Dorsolateral prefrontal cortex (tissue), 120 donors: ENCODE measurements at regions of chr11 and their contacts with region 1.

Region 1: DNA sequence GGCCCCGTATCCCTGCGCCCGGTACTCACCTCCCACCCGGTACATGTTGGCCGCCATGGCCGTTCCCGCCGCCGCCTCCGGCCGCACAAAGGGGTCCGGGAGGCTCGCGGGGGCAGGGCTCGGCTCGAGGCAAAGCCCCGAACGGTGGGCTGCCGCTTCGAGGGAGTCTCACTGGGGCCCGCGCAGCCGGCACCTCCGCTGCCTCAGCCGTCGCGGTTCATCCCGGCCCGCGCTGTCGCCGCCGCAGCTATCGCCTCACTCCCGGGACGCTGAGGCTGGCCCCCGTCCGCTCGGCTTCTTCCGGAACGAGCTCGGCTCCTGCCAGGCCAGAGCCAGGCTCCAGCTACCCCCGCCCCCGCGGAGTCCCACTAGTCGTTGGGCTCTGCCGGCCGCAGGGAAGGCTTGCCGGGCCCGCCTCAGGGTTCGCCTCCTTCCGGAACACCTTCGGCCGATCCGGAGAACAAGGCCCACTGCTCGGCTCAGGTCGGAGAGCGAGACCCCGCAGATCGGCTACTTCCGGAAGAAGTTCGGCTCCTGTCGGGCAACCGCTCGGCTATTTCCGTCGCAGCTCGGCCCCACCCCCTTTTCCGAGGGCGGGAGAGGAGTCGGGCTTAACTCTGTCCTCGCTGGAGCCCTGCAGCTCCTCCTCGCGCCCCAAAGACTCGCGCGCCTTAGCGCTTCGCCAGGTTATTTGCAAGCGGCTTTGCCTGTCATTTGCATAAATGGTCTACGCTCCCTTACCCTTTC is at the start of gene MTA2:
- DNase-seq: peak; percentile 89 to 98 (median 95)
- H3K4me3 ChIP-seq: peak within 1 kb of the TSS; percentile 54 to 100 (median 98)
- H3K27ac ChIP-seq: peak within 1 kb of the TSS; percentile 69 to 99 (median 97)
- H3K27me3 ChIP-seq: no peaks in the 10 kb centered on the region
- CTCF ChIP-seq: peak in 10 of 56 donors; percentile 1 to 30 (median 14)
- total RNA-seq, gene MTA2: 39.4 to 85.0 (median 58.9) TPM

Region 2: GRCh38 chr11:62472012-62472884 is 129.3 kb before region 1 on chr11:
- intact Hi-C with region 1: no loop called
- DNase-seq: no peak
- H3K4me3 ChIP-seq: no peak overlapping the region
- H3K27ac ChIP-seq: no peak overlapping the region
- H3K27me3 ChIP-seq: no peaks in the 10 kb centered on the region
- CTCF ChIP-seq: no peak

Region 3: DNA sequence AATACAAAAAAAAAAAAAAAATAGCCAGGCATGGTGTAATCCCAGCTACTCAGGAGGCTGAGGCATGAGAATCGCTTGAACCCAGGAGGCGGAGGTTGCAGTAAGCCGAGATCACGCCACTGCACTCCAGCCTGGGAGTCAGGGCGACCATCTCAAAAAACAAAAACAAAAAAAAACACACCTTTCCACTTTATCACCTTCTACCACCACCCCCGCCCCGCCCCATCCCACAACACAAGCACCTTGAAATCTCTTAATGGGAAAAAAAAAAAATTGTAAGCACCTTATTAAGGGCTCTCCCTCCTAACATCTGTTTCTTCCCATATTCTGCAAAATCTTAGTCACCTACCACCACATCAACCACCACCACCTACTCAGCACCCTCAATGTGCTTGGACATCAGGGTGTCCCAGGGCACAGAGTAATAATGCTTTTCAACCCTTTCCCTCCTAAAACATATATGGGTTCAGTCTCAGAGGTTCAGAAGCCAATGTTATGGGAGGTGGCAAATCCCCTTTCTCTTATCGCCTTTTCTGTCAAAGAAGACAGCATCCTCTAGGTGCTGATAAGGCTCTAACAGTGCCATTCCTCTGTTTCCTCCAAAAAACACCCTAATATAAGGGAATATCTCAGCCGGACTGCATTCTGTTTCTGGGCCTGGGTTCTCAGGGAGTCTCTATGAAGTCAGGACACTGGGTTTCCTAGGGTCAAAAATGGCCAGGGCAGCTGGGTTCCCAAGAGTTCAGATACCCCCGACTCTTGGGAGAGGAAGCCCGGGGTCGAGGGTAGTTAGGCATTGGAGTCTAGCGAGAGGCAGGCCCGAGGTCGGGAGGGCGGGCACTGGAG is 50.8 kb after region 1 on chr11:
- intact Hi-C with region 1: loop called in 1 of 2 experiments (anchors 5 kb)
- DNase-seq: no peak
- H3K4me3 ChIP-seq: peak overlapping the region; percentile 61 to 100 (median 93)
- H3K27ac ChIP-seq: peak overlapping the region; percentile 39 to 98 (median 92)
- H3K27me3 ChIP-seq: no peaks in the 10 kb centered on the region
- CTCF ChIP-seq: no peak

Region 4: DNA sequence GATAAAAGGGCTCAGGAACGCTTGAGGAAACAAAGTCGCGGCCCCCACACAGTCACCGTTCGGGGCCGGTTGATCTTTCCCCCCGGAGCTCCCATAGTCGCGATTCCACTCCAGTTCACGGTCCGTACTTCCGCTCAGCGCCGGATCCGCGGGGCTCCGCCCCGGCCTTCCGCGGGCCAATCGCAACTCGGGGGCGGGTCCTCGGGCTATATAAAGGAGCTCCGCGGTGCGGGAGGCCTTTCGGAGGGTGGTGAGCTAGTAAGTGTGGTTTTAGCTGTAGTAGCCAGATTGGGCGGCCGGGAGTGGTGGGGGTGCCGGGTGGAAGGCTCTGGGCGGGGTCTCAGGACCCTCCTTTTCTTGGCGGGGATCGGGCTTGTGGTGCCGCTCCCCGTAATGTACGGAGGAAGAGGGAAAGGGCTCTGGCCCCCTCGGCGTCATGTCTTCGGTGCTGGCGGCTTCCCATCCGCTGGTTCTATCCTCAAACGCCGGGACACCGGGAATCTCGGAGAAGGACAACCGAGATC is 63.6 kb after region 1 on chr11 and contains the starts of genes C11orf98 and CSKMT:
- intact Hi-C with region 1: loop called in 1 of 2 experiments (anchors 5 kb)
- DNase-seq: peak; percentile 91 to 99 (median 96)
- H3K4me3 ChIP-seq: peak within 1 kb of the TSS; percentile 60 to 100 (median 87)
- H3K27ac ChIP-seq: peak within 1 kb of the TSS; percentile 35 to 98 (median 90)
- H3K27me3 ChIP-seq: no peaks in the 10 kb centered on the region
- CTCF ChIP-seq: peak in 15 of 56 donors; percentile 5 to 27 (median 18)
- total RNA-seq, gene C11orf98: 26.5 to 49.6 (median 37.5) TPM
- total RNA-seq, gene CSKMT: 2.4 to 16.1 (median 6.8) TPM

Region 5: GRCh38 chr11:62678770-62679696 is 77.5 kb after region 1 on chr11 and contains the start of gene UBXN1:
- intact Hi-C with region 1: no loop called
- DNase-seq: peak; percentile 81 to 93 (median 87)
- H3K4me3 ChIP-seq: peak within 1 kb of the TSS; percentile 59 to 100 (median 97)
- H3K27ac ChIP-seq: peak within 1 kb of the TSS; percentile 60 to 97 (median 91)
- H3K27me3 ChIP-seq: no peaks in the 10 kb centered on the region
- CTCF ChIP-seq: peak in 25 of 56 donors; percentile 3 to 55 (median 22)
- total RNA-seq, gene UBXN1: 50.5 to 93.7 (median 71.1) TPM

Region 6: DNA sequence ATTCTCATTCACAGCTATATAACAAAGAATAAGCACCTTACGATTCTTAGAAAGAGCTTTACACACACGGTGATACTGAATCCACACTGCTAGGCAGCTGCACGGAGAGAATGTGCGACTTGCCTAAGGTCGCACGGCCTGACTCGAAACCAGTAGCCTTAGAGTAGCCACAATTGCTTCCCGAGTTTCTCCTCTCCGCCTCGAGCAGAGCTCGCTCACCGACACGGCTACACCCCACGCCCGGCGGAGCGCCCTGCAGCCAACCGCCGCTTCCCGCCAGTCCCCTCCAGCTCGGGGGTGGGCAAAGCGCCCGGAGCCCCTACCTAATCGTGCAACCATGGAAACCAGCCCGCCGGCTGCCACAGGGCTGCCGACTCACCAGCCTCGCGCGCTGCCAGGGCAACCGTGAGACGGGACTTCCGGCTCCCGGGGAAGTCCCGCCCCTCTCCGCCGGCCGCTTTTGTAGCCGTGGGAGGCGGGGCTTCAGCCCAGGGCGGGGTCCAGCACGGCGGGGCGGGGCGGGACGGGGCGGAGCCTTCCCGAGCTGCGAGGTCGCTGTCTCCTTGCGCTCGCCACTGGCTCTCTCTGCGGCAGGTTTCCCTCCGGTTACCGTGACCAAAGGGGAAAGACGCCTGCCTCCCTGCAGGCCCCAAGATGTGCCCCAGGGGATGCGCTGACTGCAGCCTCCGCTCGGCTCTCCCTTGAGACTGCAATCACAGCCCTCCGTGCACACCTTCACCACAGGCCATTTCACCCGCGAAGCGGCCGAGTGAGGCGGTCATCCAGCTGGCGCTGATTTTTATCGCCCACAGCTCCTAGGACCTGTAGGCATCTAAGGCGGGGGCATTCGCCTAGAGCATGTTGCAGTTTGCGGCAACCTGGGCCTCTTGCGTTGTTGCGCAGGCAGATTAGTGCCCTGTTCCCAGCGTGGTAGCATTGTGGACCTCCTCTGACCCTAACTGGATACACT is 104.6 kb after region 1 on chr11:
- intact Hi-C with region 1: loop called in 1 of 2 experiments (anchors 5 kb)
- DNase-seq: peak; percentile 91 to 98 (median 96)
- H3K4me3 ChIP-seq: peak overlapping the region; percentile 54 to 99 (median 82)
- H3K27ac ChIP-seq: peak overlapping the region; percentile 72 to 100 (median 96)
- H3K27me3 ChIP-seq: no peaks in the 10 kb centered on the region
- CTCF ChIP-seq: peak in 15 of 56 donors; percentile 3 to 32 (median 22)

Region 7: GRCh38 chr11:62719302-62719978 is 117.9 kb after region 1 on chr11:
- intact Hi-C with region 1: no loop called
- DNase-seq: no peak
- H3K4me3 ChIP-seq: no peak overlapping the region
- H3K27ac ChIP-seq: no peak overlapping the region
- H3K27me3 ChIP-seq: no peaks in the 10 kb centered on the region
- CTCF ChIP-seq: no peak

Region 8: DNA sequence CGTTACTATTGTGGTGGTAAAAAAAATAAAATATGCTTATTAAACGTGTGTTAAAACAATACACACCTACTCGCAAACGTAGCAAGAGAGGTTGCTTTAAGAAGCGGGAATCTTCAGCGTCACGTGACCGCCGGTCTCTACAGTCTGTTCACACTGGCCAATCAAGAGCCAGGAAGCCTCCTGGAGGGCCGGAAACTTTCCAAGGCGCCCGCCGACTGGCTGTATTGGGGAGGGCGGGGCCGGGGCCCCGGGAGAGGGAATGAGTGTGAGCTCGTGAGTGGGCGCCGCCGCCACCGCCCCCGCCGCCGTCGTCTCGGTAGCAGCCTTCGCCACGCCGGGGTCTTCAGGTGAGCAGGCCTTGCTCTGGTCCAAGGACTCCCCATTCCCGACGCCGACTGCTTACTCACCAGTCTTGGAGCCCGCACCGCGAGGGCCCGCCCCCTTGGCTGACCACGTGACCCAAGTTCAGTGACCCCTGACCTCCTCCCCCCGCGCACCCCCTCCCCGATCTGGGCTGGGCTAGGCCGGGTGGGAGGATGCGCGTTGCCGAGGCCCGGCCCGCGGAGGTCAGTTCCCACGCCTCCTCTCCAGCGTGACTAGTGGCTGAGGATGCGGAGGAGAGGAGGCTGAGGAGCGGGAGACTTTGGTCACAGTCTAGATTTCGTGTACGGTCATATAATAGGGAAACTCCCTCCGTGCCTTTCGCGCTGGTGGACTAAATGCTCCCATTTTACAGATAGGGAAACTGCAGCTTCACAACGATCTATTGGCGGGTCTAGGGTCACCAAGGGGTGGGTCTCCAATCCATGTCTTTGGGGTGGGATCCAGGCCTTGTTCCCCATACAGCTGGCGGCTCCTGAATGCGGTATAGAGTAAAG is 169.8 kb after region 1 on chr11 and contains the start of gene TAF6L:
- intact Hi-C with region 1: no loop called
- DNase-seq: peak; percentile 97 to 100 (median 98)
- H3K4me3 ChIP-seq: peak within 1 kb of the TSS; percentile 61 to 100 (median 82)
- H3K27ac ChIP-seq: peak within 1 kb of the TSS; percentile 86 to 99 (median 97)
- H3K27me3 ChIP-seq: no peaks in the 10 kb centered on the region
- CTCF ChIP-seq: peak in 16 of 56 donors; percentile 2 to 41 (median 20)
- total RNA-seq, gene TAF6L: 9.3 to 39.3 (median 22.8) TPM